ENCODE measurements at regions of chr11 and their contacts with region 1.

Region 1: GRCh38 chr11:119334174-119334930 is at the start of gene RNF26:
- DNase-seq: peak; percentile 98
- ATAC-seq: peak; percentile 96
- H3K4me3 Mint-ChIP-seq: peak within 1 kb of the TSS; percentile 92
- H3K27ac Mint-ChIP-seq: peak within 1 kb of the TSS; percentile 96
- H3K4me1 Mint-ChIP-seq: peaks cover 60% of the 10 kb centered on the region
- H3K27me3 Mint-ChIP-seq: peaks cover 20% of the 10 kb centered on the region
- total RNA-seq, gene RNF26: 40.5 to 41.8 TPM

Region 2: DNA sequence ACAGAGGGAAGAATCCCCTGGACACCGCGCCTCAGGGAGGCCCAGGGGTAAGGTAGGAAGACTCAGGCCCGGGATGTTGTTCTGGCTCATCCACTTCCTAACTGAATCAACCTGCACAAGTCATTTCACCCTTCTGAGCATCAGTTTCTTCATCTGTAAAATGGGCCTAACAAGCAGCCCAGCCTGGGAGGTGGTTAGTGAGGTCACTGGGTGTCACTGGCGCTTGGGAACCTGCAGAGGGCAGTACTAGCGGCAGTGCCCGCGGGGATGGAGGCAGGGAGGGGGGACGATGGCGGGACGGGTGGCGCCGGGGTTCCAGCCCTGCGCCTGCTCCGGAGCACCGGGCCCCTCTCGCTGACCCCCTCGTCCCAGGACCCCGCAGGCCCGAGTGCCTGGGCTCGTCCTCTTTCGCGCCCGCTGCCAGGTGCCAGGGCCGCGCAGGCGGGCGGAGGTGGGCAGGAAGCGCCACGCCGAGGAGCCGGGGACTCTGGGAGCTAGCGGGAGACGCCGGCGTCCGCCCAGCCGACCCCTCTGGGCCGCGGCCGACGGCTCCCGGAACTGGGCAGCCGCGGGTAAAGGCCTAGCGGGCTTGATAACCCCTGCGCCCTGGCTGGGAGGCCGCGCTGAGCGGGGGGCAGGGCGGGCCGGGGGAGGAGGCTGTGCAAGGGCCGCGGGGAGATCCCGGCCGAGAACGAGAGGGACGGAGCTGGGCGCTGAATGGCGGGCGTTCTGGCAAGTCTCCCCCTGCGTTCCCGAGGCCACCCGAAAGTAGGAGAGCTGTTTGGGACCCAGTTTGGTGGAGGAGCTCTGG is 165.7 kb before region 1 on chr11 and contains the start of gene NLRX1:
- CTCF ChIA-PET with region 1: interaction called, 10 read pairs
- POLR2A ChIA-PET with region 1: interaction called, 3 read pairs
- DNase-seq: peak; percentile 92
- ATAC-seq: peak; percentile 96
- H3K4me3 Mint-ChIP-seq: peak within 1 kb of the TSS; percentile 86
- H3K27ac Mint-ChIP-seq: peak within 1 kb of the TSS; percentile 92
- H3K4me1 Mint-ChIP-seq: peaks cover 30% of the 10 kb centered on the region
- H3K27me3 Mint-ChIP-seq: no peaks in the 10 kb centered on the region
- total RNA-seq, gene NLRX1: 24.6 to 24.8 TPM

Region 3: DNA sequence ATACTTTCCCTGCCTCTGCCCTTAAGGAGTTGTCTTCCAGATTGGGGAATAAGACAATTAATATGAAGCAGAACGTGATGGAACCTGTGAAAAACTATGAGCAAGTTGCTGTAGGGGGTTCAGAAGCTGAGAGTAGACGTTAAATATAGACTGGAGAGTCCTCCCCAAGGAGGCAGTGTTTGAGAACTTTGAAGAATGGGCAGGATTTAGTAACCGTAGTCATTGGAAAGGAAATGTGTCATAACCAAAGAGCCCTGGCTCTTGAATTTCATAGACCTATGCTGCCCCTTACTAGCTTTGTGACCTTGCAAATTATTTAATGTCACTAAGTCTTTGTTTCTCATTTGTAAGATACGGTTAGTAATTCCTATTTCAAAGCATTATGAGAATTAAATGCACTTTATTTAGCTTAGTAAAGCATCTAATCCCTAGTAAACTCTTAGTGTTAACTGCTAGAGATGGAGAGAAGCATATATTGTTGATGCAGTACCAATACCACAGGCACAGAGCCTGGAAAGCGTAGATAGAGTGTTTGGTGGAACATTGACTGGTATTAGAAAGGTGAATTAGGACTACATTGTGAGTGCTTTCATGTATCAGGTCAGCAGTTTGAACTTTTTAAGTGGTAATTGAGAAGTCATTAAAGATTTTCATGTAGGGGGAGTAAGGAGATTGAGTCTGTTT is 71.5 kb before region 1 on chr11:
- CTCF ChIA-PET with region 1: interaction called, 16 read pairs
- POLR2A ChIA-PET with region 1: no interaction called
- DNase-seq: peak; percentile 47
- ATAC-seq: peak; percentile 63
- H3K4me3 Mint-ChIP-seq: no peak overlapping the region
- H3K27ac Mint-ChIP-seq: no peak overlapping the region
- H3K4me1 Mint-ChIP-seq: peaks cover 50% of the 10 kb centered on the region
- H3K27me3 Mint-ChIP-seq: no peaks in the 10 kb centered on the region

Region 4: GRCh38 chr11:119356349-119357031 is 22.1 kb after region 1 on chr11:
- CTCF ChIA-PET with region 1: interaction called, 37 read pairs
- POLR2A ChIA-PET with region 1: interaction called, 3 read pairs
- DNase-seq: peak; percentile 81
- ATAC-seq: peak; percentile 96
- H3K4me3 Mint-ChIP-seq: peak overlapping the region; percentile 73
- H3K27ac Mint-ChIP-seq: peak overlapping the region; percentile 78
- H3K4me1 Mint-ChIP-seq: peaks cover 13% of the 10 kb centered on the region
- H3K27me3 Mint-ChIP-seq: peaks cover 34% of the 10 kb centered on the region

Region 5: DNA sequence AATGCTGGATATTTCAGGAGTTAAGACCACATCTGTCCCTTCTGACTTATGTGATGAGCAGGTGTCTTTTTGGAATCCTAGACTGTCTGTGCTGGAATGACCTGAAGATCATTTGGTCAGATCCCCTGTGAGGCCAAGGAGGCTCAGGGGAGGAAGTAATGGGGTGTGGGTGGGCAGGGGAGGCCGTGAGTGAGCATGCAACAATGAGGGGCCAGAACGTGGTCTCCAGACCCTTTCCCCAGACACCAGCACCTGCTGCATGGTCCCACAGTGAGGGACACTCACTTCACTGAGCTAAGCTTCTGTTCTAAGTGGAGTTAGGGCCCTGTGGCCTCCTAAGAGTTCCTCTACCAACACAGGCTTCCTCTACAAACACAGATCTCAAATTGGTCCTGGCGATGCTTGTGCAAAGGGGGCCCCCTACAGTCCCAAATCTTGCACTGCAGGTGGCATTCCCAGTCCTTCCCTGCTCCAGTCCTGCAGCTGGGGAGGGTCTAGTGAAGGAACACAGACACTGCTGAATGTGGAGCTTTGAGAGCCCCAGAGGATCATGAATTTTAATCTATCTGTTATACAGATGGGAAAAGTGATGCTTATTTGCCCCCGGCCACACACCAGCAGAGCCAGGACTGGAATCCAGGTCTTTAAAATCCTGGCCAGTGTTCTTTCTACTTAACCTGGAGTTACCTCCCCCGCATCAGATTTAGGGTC is 39.7 kb after region 1 on chr11:
- CTCF ChIA-PET with region 1: interaction called, 18 read pairs
- POLR2A ChIA-PET with region 1: no interaction called
- DNase-seq: peak; percentile 55
- ATAC-seq: peak; percentile 45
- H3K4me3 Mint-ChIP-seq: no peak overlapping the region
- H3K27ac Mint-ChIP-seq: no peak overlapping the region
- H3K4me1 Mint-ChIP-seq: peaks cover 16% of the 10 kb centered on the region
- H3K27me3 Mint-ChIP-seq: peaks cover 9% of the 10 kb centered on the region

Region 6: GRCh38 chr11:119381181-119381988 is 47.0 kb after region 1 on chr11 and contains the start of gene USP2:
- CTCF ChIA-PET with region 1: interaction called, 18 read pairs
- POLR2A ChIA-PET with region 1: no interaction called
- DNase-seq: peak; percentile 96
- ATAC-seq: peak; percentile 98
- H3K4me3 Mint-ChIP-seq: no peak within 1 kb of the TSS
- H3K27ac Mint-ChIP-seq: peak within 1 kb of the TSS; percentile 71
- H3K4me1 Mint-ChIP-seq: peaks cover 12% of the 10 kb centered on the region
- H3K27me3 Mint-ChIP-seq: peaks cover 9% of the 10 kb centered on the region
- total RNA-seq, gene USP2: 0.55 to 0.68 TPM

Region 7: GRCh38 chr11:119474682-119475596 is 140.6 kb after region 1 on chr11:
- CTCF ChIA-PET with region 1: interaction called, 10 read pairs
- POLR2A ChIA-PET with region 1: no interaction called
- DNase-seq: peak; percentile 63
- ATAC-seq: peak; percentile 59
- H3K4me3 Mint-ChIP-seq: no peak overlapping the region
- H3K27ac Mint-ChIP-seq: no peak overlapping the region
- H3K4me1 Mint-ChIP-seq: no peaks in the 10 kb centered on the region
- H3K27me3 Mint-ChIP-seq: peaks cover 4% of the 10 kb centered on the region

Measured in activated CD8-positive, alpha-beta T cell treated with anti-CD3 and anti-CD28 coated beads, Interleukin-2, amount 10 ng/mL, durations not matched to agents 7 days and 5 days (primary cell).